Activated CD8-positive, alpha-beta T cell treated with anti-CD3 and anti-CD28 coated beads, Interleukin-2, amount 10 ng/mL, durations not matched to agents 7 days and 5 days (primary cell): ENCODE measurements at regions of chr4 and their contacts with region 1.

Region 1: GRCh38 chr4:153521999-153522801 is 56.0 kb downstream of the TMEM131L start:
- DNase-seq: peak; percentile 89
- ATAC-seq: peak; percentile 80
- H3K4me3 Mint-ChIP-seq: peak overlapping the region; percentile 70
- H3K27ac Mint-ChIP-seq: peak overlapping the region; percentile 96
- H3K4me1 Mint-ChIP-seq: peaks cover 95% of the 10 kb centered on the region
- H3K27me3 Mint-ChIP-seq: no peaks in the 10 kb centered on the region

Region 2: DNA sequence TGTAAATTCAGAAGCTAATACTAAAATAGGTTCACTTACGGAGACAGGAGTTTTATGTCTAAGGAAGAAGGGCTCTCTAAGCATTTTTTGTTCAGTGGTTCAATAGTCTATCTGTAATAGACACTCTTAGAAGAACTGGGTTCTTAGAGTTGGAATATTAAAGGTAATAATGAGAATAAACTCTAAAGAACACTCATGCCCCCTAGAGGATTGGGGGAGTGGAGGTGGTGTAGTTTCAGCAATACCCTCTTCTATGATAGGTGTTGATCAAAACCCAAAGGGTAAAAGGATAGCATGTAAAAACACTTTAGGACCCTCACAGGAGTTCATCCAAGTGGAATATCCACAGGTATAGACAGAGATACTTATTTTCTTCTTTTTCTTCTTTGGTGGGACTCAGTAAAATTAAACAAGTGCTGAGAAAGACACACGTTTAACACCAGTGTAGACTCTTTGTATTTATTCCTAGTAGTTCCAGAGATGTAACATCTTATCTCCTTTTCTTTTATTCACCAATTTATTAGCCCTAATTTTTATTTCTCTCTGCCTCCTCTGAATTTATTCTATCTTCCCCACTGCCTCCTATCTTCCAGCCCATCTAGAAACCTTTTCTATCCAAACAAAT is 203.4 kb before region 1 on chr4:
- CTCF ChIA-PET with region 1: no interaction called
- POLR2A ChIA-PET with region 1: no interaction called
- DNase-seq: no peak
- ATAC-seq: no peak
- H3K4me3 Mint-ChIP-seq: no peak overlapping the region
- H3K27ac Mint-ChIP-seq: no peak overlapping the region
- H3K4me1 Mint-ChIP-seq: no peaks in the 10 kb centered on the region
- H3K27me3 Mint-ChIP-seq: peaks cover 4% of the 10 kb centered on the region

Region 3: DNA sequence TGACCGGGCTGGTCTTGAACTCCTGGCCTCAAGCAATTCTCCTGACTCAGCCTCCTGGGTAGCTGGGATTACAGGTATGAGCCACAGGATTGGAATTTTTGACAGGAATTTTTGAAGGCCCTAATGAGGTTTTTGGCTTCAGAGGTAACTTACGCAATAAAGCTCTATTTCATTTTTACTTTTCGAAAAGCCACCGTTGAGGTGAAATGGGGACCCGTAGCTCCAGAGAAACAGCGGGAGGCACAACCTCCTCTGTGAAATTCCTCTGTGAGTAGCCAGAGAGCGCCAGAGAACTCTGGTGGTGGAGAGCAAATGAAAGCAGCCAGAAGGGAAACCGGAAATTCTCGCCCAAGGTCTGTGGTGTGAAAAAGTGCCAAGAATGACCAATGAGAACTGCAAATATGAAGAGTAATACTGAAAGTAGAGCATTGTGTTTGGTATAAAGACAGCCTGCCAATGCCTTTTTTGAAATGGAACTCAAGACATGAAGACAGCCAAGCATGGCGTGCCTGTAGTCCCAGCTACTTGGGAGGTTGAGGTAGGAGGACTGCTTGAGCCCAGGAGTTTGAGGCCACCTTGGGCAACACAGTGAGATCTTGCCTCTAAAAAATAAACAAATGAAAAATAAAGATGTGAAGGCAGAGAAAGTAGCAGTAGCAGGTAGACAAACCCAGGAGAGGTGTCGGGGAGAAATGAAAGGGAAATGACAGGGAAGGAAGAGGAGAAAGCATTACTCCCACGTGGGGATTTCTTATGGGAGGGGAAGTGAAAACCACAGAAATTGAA is 89.0 kb before region 1 on chr4:
- CTCF ChIA-PET with region 1: interaction called, 19 read pairs
- POLR2A ChIA-PET with region 1: interaction called, 3 read pairs
- DNase-seq: peak; percentile 90
- ATAC-seq: peak; percentile 82
- H3K4me3 Mint-ChIP-seq: peak overlapping the region; percentile 78
- H3K27ac Mint-ChIP-seq: peak overlapping the region; percentile 95
- H3K4me1 Mint-ChIP-seq: peaks cover 77% of the 10 kb centered on the region
- H3K27me3 Mint-ChIP-seq: no peaks in the 10 kb centered on the region

Region 4: GRCh38 chr4:153488006-153488891 is 34.0 kb before region 1 on chr4:
- CTCF ChIA-PET with region 1: interaction called, 19 read pairs
- POLR2A ChIA-PET with region 1: interaction called, 24 read pairs
- DNase-seq: peak; percentile 79
- ATAC-seq: peak; percentile 60
- H3K4me3 Mint-ChIP-seq: peak overlapping the region; percentile 57
- H3K27ac Mint-ChIP-seq: peak overlapping the region; percentile 90
- H3K4me1 Mint-ChIP-seq: peaks cover 85% of the 10 kb centered on the region
- H3K27me3 Mint-ChIP-seq: no peaks in the 10 kb centered on the region

Region 5: GRCh38 chr4:153497988-153498967 is 23.9 kb before region 1 on chr4:
- CTCF ChIA-PET with region 1: interaction called, 8 read pairs
- POLR2A ChIA-PET with region 1: interaction called, 20 read pairs
- DNase-seq: no peak
- ATAC-seq: no peak
- H3K4me3 Mint-ChIP-seq: peak overlapping the region; percentile 67
- H3K27ac Mint-ChIP-seq: peak overlapping the region; percentile 91
- H3K4me1 Mint-ChIP-seq: peaks cover 92% of the 10 kb centered on the region
- H3K27me3 Mint-ChIP-seq: no peaks in the 10 kb centered on the region

Region 6: GRCh38 chr4:153535772-153536513 is 13.7 kb after region 1 on chr4:
- CTCF ChIA-PET with region 1: interaction called, 20 read pairs
- POLR2A ChIA-PET with region 1: interaction called, 3 read pairs
- DNase-seq: no peak
- ATAC-seq: no peak
- H3K4me3 Mint-ChIP-seq: no peak overlapping the region
- H3K27ac Mint-ChIP-seq: peak overlapping the region; percentile 78
- H3K4me1 Mint-ChIP-seq: peaks cover 71% of the 10 kb centered on the region
- H3K27me3 Mint-ChIP-seq: no peaks in the 10 kb centered on the region

Region 7: DNA sequence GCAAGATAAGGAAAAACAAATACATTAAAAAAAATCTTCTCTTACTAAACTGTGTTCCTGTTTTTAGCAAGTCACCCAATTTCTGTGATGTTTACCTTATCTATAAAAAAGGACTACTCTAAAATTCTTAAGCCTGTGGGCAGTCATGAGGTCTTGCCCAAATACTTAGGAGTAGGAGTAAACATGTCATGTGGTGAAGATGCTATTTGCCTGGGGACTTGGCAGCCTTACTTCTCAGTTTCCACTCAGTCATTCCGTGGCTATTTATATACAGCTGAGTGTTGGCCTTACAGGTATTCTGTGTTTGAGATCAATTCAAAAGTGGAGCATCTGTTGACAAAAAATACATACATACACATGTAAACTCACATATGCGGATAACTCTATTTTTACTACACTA is 72.0 kb after region 1 on chr4:
- CTCF ChIA-PET with region 1: no interaction called
- POLR2A ChIA-PET with region 1: no interaction called
- DNase-seq: no peak
- ATAC-seq: no peak
- H3K4me3 Mint-ChIP-seq: no peak overlapping the region
- H3K27ac Mint-ChIP-seq: no peak overlapping the region
- H3K4me1 Mint-ChIP-seq: no peaks in the 10 kb centered on the region
- H3K27me3 Mint-ChIP-seq: no peaks in the 10 kb centered on the region